ENCODE measurements at regions of chr15 and their contacts with region 1.

Region 1: GRCh38 chr15:31488426-31489204 is 162.0 kb downstream of the KLF13 start:
- DNase-seq: peak; percentile 82
- H3K4me3 ChIP-seq: no peak overlapping the region
- H3K27ac ChIP-seq: peak overlapping the region in 3 of 8 donors; percentile 32 to 56 (median 47)
- H3K4me1 ChIP-seq: peaks cover 0 to 43% (median 26%) of the 10 kb centered on the region in 6 donors
- H3K27me3 ChIP-seq: peaks cover 0 to 13% (median 0%) of the 10 kb centered on the region in 7 donors
- CTCF ChIP-seq: peak; percentile 88 to 99 (median 96)
- POLR2A ChIP-seq: no peak

Region 2: GRCh38 chr15:31215490-31216214 is 273.0 kb before region 1 on chr15:
- intact Hi-C with region 1: loop called (anchors 5 kb)
- DNase-seq: peak; percentile 99
- H3K4me3 ChIP-seq: peak overlapping the region; percentile 34 to 82 (median 65)
- H3K27ac ChIP-seq: peak overlapping the region; percentile 85 to 100 (median 98)
- H3K4me1 ChIP-seq: peaks cover 0 to 84% (median 43%) of the 10 kb centered on the region in 6 donors
- H3K27me3 ChIP-seq: no peaks in the 10 kb centered on the region
- CTCF ChIP-seq: peak; percentile 93 to 98 (median 96)
- POLR2A ChIP-seq: peak in 1 of 3 donors; percentile 18

Region 3: GRCh38 chr15:31326156-31326732 is 162.4 kb before region 1 on chr15:
- intact Hi-C with region 1: loop called (anchors 10 kb)
- DNase-seq: peak; percentile 100
- H3K4me3 ChIP-seq: peak overlapping the region; percentile 43 to 91 (median 78)
- H3K27ac ChIP-seq: peak overlapping the region; percentile 86 to 100 (median 99)
- H3K4me1 ChIP-seq: peaks cover 9 to 56% (median 48%) of the 10 kb centered on the region in 6 donors
- H3K27me3 ChIP-seq: no peaks in the 10 kb centered on the region
- CTCF ChIP-seq: peak in 3 of 11 experiments; percentile 8 to 53 (median 42)
- POLR2A ChIP-seq: peak; percentile 90 to 95 (median 94)

Region 4: DNA sequence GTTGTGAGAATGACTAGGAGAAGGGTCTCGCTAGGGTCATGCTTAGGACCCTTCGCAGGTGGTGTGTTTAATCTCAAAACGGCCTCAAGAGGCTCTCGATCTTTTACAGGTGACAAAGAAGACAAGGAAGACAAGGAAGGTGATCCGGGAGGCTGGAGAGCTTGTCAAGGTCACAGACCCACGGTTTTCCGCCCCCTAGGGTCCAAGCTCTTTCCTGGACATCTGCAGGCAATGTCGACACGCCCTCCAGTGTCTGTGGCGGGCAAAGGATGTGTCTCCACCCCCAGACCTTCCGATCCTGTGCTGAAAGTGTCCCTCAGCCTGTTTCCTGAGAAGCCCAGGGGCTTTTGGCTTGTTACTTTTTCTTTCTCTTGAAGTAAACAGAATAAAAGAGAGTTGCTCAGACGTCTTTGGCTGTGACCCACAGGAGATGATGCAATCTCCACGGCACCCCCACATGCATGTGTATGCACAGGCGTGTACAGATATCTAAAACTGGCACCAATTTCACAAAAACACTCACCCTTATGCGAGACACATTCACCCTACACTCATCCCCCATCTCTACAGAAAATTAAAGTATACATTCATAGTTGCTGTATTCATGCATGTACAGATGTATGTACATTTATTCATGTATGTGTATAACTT is 53.2 kb before region 1 on chr15:
- intact Hi-C with region 1: loop called (anchors 5 kb)
- DNase-seq: peak; percentile 94
- H3K4me3 ChIP-seq: peak overlapping the region in 7 of 8 donors; percentile 6 to 59 (median 27)
- H3K27ac ChIP-seq: peak overlapping the region; percentile 42 to 94 (median 84)
- H3K4me1 ChIP-seq: peaks cover 0 to 89% (median 58%) of the 10 kb centered on the region in 6 donors
- H3K27me3 ChIP-seq: no peaks in the 10 kb centered on the region
- CTCF ChIP-seq: peak; percentile 45 to 88 (median 83)
- POLR2A ChIP-seq: no peak